Spleen (tissue), 13 donors: ENCODE measurements at regions of chr12 and their contacts with region 1.

Region 1: DNA sequence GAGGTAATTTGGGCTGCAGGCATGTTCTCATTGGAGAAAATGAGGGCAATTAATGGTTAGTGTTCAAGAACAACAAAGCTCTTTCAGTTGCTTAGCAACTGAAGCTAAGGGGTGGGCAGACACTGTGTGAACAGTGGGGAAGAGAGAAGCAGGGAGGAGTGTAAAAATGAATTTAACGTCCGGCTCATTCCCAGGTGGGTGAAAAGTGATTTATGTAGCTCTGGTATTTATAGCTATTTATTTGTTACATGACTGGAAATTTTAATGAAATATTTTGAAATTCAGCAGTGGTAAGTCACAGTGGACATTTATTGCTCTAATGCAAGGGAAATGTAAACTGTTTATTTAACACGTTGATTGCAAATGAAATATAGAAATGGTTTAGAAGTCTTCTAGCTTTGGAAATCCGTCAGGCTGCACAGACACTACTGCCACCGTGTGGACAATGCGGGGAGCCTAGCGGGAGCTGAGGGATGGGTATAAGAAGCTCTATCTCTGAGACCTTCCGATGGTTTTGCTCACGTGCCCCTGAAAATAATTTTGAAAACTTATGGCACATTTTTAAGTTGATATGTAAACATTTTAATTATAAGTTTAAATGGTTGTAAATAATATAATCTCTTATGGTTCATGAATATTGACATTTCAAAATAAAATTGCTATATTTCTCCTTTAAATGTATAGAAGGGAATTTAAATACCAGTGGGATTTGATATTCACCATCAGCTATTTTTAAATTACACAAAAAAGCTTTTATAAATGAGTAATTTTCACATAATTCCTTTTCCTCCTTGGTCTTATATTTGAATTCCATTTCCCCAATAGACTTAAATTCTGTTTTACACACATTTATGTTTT is 54.4 kb downstream of the E2F7 start:
- DNase-seq: peak; percentile 87
- H3K4me3 ChIP-seq: no peak overlapping the region
- H3K27ac ChIP-seq: no peak overlapping the region
- H3K4me1 ChIP-seq: peaks cover 0 to 9% (median 6%) of the 10 kb centered on the region in 6 donors
- H3K27me3 ChIP-seq: peaks cover 0 to 5% (median 0%) of the 10 kb centered on the region in 7 donors
- CTCF ChIP-seq: peak; percentile 31 to 90 (median 76)
- POLR2A ChIP-seq: no peak

Region 2: DNA sequence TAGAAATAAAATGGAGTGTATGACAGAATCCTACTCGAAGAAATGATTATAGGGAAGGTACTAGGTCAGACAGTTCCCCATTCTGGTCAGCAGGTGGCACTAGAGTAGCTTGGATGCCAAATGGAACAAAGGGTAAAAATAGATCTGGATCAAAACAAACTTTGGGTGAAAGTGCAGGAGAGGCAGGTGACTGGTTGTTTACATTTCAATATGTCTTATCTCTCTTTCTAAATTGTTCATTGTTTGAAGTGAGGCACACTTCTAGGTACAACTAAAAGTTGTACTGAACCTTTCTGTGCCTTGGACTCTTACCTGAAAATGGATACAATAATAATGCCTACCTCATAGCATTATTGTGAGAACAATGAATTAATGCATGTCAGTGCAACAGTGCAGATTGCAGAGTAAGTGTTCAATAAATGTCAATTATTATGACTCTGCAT is 389.3 kb before region 1 on chr12:
- intact Hi-C with region 1: loop called (anchors 5 kb)
- DNase-seq: no peak
- H3K4me3 ChIP-seq: no peak overlapping the region
- H3K27ac ChIP-seq: no peak overlapping the region
- H3K4me1 ChIP-seq: peaks cover 0 to 13% (median 6%) of the 10 kb centered on the region in 6 donors
- H3K27me3 ChIP-seq: no peaks in the 10 kb centered on the region
- CTCF ChIP-seq: peak; percentile 83 to 96 (median 93)
- POLR2A ChIP-seq: no peak

Region 3: DNA sequence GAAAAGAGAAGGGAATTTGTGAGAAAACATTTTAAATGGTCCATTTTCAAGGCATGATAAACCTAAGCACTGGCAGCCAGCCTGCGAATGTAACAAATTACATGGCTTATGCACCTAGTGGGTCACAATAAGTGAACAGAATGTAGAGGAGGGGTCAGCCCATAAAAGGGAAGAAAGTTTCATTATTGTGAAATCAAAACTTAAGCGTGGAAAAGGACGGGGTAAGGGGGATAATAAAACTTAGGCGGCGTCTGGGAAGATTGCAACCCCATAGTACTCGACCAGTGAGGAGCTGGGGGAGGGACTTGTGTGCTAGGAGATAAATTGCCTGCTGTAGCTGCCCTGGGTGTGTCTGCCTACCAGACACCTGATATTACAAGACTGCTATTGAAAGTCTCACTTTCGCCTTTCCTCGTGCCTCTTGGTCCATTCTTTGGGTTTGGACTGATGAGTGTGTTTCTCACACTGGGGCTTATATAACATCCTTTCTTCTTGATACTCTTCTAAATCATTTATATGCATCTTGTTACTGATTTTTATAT is 206.4 kb before region 1 on chr12:
- intact Hi-C with region 1: loop called (anchors 10 kb)
- DNase-seq: no peak
- H3K4me3 ChIP-seq: no peak overlapping the region
- H3K27ac ChIP-seq: no peak overlapping the region
- H3K4me1 ChIP-seq: peaks cover 0 to 5% (median 0%) of the 10 kb centered on the region in 6 donors
- H3K27me3 ChIP-seq: no peaks in the 10 kb centered on the region
- CTCF ChIP-seq: no peak
- POLR2A ChIP-seq: no peak